Activated T-helper 1 cell treated with anti-CD3 and anti-CD28 coated beads, Interleukin-12 subunit alpha, Interleukin-12 subunit beta, Interleukin-2, Interleukin-4 antibody, amounts not matched to agents 30 ng/mL and 10 ng/mL and 1 ng/mL, durations not matched to agents 14 hours and 24 hours and 36 hours (primary cell): ENCODE measurements at regions of chr5 and their contacts with region 1.

Region 1: GRCh38 chr5:39948867-39949468 is 524.2 kb upstream of the DAB2 start:
- DNase-seq: peak; percentile 46
- H3K4me3 Mint-ChIP-seq: no peak overlapping the region
- H3K27ac Mint-ChIP-seq: peak overlapping the region; percentile 7
- H3K4me1 Mint-ChIP-seq: peaks cover 6% of the 10 kb centered on the region
- H3K27me3 Mint-ChIP-seq: peaks cover 5% of the 10 kb centered on the region

Region 2: DNA sequence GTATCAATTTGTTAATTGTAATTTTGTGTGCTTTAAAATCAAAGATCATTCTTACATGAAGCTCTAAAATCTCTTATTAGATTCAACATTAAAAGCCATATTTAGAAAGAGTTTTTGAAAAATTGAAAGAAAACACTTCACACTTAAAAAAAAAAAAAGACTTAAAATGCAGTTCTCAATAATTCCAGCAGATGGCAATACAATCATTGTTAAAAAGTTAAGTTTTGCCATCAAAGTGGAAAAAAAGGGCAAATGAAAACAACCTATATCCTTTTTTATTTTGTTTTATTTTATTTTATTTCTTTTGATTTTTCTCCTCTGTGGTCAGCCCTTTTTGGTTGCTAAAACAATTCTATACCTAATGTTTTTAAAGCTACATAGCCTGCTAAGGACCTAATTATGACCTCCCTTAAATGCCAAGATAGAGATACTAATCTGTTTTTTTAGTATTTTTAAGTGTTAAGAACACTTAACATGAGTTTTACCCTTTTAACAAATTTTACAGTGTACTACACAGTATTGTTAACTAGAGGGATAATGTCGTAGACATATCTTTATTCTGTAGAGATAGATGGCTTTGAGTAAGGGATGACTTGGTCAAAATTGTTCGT is 370.0 kb before region 1 on chr5:
- intact Hi-C with region 1: loop called (anchors 2 kb)
- DNase-seq: no peak
- H3K4me3 Mint-ChIP-seq: no peak overlapping the region
- H3K27ac Mint-ChIP-seq: no peak overlapping the region
- H3K4me1 Mint-ChIP-seq: peaks cover 8% of the 10 kb centered on the region
- H3K27me3 Mint-ChIP-seq: peaks cover 17% of the 10 kb centered on the region

Region 3: GRCh38 chr5:40333459-40334244 is 384.7 kb after region 1 on chr5:
- intact Hi-C with region 1: loop called (anchors 2 kb)
- DNase-seq: no peak
- H3K4me3 Mint-ChIP-seq: no peak overlapping the region
- H3K27ac Mint-ChIP-seq: peak overlapping the region; percentile 27
- H3K4me1 Mint-ChIP-seq: peaks cover 43% of the 10 kb centered on the region
- H3K27me3 Mint-ChIP-seq: no peaks in the 10 kb centered on the region

Region 4: GRCh38 chr5:40736103-40736875 is 787.3 kb after region 1 on chr5:
- intact Hi-C with region 1: loop called (anchors 1 kb)
- DNase-seq: no peak
- H3K4me3 Mint-ChIP-seq: no peak overlapping the region
- H3K27ac Mint-ChIP-seq: no peak overlapping the region
- H3K4me1 Mint-ChIP-seq: peaks cover 22% of the 10 kb centered on the region
- H3K27me3 Mint-ChIP-seq: no peaks in the 10 kb centered on the region

Region 5: GRCh38 chr5:40879163-40879942 is 930.4 kb after region 1 on chr5:
- intact Hi-C with region 1: loop called (anchors 1 kb)
- DNase-seq: no peak
- H3K4me3 Mint-ChIP-seq: no peak overlapping the region
- H3K27ac Mint-ChIP-seq: no peak overlapping the region
- H3K4me1 Mint-ChIP-seq: peaks cover 5% of the 10 kb centered on the region
- H3K27me3 Mint-ChIP-seq: peaks cover 10% of the 10 kb centered on the region